ENCODE measurements at regions of chr1 and their contacts with region 1.

Region 1: GRCh38 chr1:234997201-234997895 is 131.3 kb downstream of the TOMM20 start:
- DNase-seq: peak; percentile 99 to 100
- ATAC-seq: peak; percentile 88 to 93
- H3K4me3 ChIP-seq: peak overlapping the region in 3 of 4 donors; percentile 12 to 24 (median 18)
- H3K27ac ChIP-seq: peak overlapping the region; percentile 93 to 99 (median 94)
- H3K4me1 ChIP-seq: peaks cover 25 to 28% of the 10 kb centered on the region in 2 donors
- H3K27me3 ChIP-seq: no peaks in the 10 kb centered on the region
- CTCF ChIP-seq: peak in 1 of 5 experiments; percentile 11
- POLR2A ChIP-seq: peak; percentile 59 to 73

Region 2: DNA sequence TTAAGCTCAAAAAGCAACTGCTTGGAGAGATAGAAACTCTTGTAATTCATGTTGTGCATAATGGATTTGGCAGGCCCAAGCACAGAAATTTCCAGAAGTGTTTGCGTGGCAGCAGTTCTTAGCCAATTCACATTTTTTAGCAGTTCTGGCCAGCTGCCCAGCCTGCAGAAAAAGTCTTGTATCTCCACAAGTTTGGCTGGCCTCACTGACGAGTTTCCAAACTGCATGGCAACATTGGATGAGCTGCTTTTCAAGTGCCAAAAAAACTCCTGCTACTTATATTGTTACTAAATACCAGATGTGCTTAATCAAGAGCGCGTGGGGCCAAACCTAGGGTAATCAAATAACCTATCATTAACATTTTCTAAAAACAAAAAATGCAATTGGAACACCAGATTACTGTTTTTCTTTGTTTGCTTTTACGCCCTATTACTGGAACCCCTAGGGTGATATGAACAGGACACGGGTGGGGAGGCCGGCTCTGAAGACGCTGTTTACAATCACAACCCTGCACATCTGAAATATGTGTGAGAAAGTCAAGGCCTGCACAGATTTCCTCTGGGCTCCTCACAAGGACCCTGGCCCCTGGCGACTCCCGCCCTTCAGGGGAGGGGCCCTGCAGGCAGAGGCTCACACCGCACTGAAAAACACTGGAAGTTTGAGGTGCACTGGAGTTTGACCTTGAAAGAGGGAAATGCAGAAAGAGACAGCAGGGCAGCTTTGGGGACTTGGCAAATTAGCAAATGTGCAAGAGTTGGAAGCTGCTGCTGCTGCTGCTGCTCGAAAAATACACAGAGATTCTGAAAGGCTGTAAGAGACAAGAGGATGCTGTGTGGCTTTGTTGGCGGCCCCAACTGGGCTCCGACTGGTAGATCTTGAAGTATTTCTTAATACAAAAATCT is 463.1 kb before region 1 on chr1:
- in situ Hi-C with region 1: no loop called
- intact Hi-C with region 1: loop called (anchors 2 kb)
- DNase-seq: peak; percentile 79 to 89
- ATAC-seq: no peak
- H3K4me3 ChIP-seq: no peak overlapping the region
- H3K27ac ChIP-seq: peak overlapping the region; percentile 93 to 100 (median 98)
- H3K4me1 ChIP-seq: peaks cover 98% of the 10 kb centered on the region in 2 donors
- H3K27me3 ChIP-seq: no peaks in the 10 kb centered on the region
- CTCF ChIP-seq: no peak
- POLR2A ChIP-seq: no peak

Region 3: GRCh38 chr1:234881893-234882771 is 115.2 kb before region 1 on chr1:
- in situ Hi-C with region 1: loop called in 3 of 4 experiments (anchors 10 to 25 kb)
- intact Hi-C with region 1: loop called (anchors 1 kb)
- DNase-seq: no peak
- ATAC-seq: no peak
- H3K4me3 ChIP-seq: no peak overlapping the region
- H3K27ac ChIP-seq: peak overlapping the region in 1 of 4 donors; percentile 83
- H3K4me1 ChIP-seq: peaks cover 37 to 44% of the 10 kb centered on the region in 2 donors
- H3K27me3 ChIP-seq: no peaks in the 10 kb centered on the region
- CTCF ChIP-seq: no peak
- POLR2A ChIP-seq: no peak

Region 4: GRCh38 chr1:234912548-234913277 is 84.6 kb before region 1 on chr1:
- in situ Hi-C with region 1: no loop called
- intact Hi-C with region 1: loop called (anchors 5 kb)
- DNase-seq: no peak
- ATAC-seq: no peak
- H3K4me3 ChIP-seq: no peak overlapping the region
- H3K27ac ChIP-seq: peak overlapping the region; percentile 59 to 94 (median 91)
- H3K4me1 ChIP-seq: peaks cover 45 to 53% of the 10 kb centered on the region in 2 donors
- H3K27me3 ChIP-seq: no peaks in the 10 kb centered on the region
- CTCF ChIP-seq: peak in 3 of 5 experiments; percentile 25 to 41 (median 30)
- POLR2A ChIP-seq: no peak

Region 5: GRCh38 chr1:235067263-235068172 is 70.2 kb after region 1 on chr1:
- in situ Hi-C with region 1: loop called in 3 of 4 experiments (anchors 5 kb)
- intact Hi-C with region 1: no loop called
- DNase-seq: peak; percentile 92 to 96
- ATAC-seq: peak; percentile 77 to 82
- H3K4me3 ChIP-seq: no peak overlapping the region
- H3K27ac ChIP-seq: peak overlapping the region; percentile 87 to 100 (median 90)
- H3K4me1 ChIP-seq: peaks cover 53 to 58% of the 10 kb centered on the region in 2 donors
- H3K27me3 ChIP-seq: no peaks in the 10 kb centered on the region
- CTCF ChIP-seq: no peak
- POLR2A ChIP-seq: peak; percentile 40 to 54